ENCODE measurements at regions of chr7 and their contacts with region 1.

Region 1: GRCh38 chr7:12490117-12490688 is 80.3 kb upstream of the SCIN start:
- DNase-seq: no peak
- ATAC-seq: peak; percentile 65
- H3K4me3 Mint-ChIP-seq: no peak overlapping the region
- H3K27ac Mint-ChIP-seq: no peak overlapping the region
- H3K4me1 Mint-ChIP-seq: peaks cover 29% of the 10 kb centered on the region
- H3K27me3 Mint-ChIP-seq: no peaks in the 10 kb centered on the region
- CTCF ChIP-seq: peak; percentile 43

Region 2: DNA sequence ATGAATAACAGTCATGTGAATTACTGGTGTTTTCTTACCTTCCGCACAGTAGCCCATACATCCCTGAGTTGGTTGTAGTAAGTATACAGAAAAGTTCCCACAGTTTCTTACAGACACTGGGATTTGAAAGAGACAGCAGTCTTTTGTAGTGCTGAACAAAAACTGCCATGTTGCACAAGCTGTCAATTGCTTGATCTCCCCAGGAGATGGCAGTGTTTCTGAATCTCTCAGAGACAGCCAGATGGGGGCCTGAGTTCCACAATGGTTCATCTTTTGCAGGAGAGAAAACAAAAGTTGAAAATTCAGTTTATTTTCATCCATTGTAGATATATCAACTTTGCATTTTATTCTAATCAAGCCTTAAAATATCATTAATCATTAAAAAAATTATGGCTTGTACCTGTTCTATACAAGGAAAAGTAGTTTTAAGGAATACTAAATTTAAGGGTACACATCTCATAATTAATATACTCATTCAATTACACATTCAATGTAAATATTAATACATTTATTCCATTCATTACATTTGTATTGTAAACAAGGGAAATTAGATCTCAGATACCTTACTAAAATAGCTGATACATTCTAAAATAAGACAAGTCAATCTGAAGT is 101.0 kb before region 1 on chr7:
- CTCF ChIA-PET with region 1: interaction called, 12 read pairs
- POLR2A ChIA-PET with region 1: no interaction called
- DNase-seq: peak; percentile 65
- ATAC-seq: peak; percentile 93
- H3K4me3 Mint-ChIP-seq: no peak overlapping the region
- H3K27ac Mint-ChIP-seq: no peak overlapping the region
- H3K4me1 Mint-ChIP-seq: peaks cover 30% of the 10 kb centered on the region
- H3K27me3 Mint-ChIP-seq: no peaks in the 10 kb centered on the region
- CTCF ChIP-seq: peak; percentile 62

Region 3: DNA sequence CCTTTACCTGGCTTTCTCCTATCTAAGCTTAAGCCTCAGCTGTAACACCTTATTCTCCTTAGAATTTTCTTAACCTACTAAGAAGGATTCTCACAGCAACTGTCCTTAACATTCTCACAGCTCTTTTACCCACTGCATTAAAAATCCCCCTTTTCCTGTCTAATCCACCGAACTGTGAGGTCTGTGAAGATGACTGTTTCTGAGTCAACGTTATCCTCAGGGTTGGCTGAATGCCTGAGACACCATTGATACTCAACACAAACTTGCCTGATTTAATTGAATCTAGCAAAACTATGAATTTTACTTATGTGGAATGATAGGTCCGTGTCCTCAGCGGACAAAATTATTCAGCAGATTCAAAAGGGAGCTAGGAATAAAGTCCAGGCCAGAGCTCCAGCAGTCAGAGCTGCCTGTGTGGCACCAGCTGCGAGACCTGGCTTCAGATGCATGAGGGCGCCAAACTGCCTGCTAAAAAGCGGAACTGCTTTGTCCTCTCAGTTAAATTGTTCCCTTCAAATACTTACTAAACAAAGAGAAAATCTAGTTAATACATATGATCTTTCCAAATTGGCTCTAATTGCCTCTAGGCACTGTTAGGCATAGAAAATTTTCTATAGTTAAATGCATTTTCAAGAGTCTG is 53.2 kb before region 1 on chr7:
- CTCF ChIA-PET with region 1: interaction called, 47 read pairs
- POLR2A ChIA-PET with region 1: no interaction called
- DNase-seq: peak; percentile 51
- ATAC-seq: peak; percentile 91
- H3K4me3 Mint-ChIP-seq: no peak overlapping the region
- H3K27ac Mint-ChIP-seq: no peak overlapping the region
- H3K4me1 Mint-ChIP-seq: peaks cover 27% of the 10 kb centered on the region
- H3K27me3 Mint-ChIP-seq: no peaks in the 10 kb centered on the region; the same call in 1 of the 2 replicates
- CTCF ChIP-seq: no peak

Region 4: GRCh38 chr7:12475362-12476063 is 14.7 kb before region 1 on chr7:
- CTCF ChIA-PET with region 1: interaction called, 12 read pairs
- POLR2A ChIA-PET with region 1: no interaction called
- DNase-seq: no peak
- ATAC-seq: peak; percentile 71
- H3K4me3 Mint-ChIP-seq: no peak overlapping the region
- H3K27ac Mint-ChIP-seq: no peak overlapping the region
- H3K4me1 Mint-ChIP-seq: peaks cover 8% of the 10 kb centered on the region
- H3K27me3 Mint-ChIP-seq: no peaks in the 10 kb centered on the region
- CTCF ChIP-seq: no peak

Region 5: GRCh38 chr7:12518920-12519681 is 28.9 kb after region 1 on chr7:
- CTCF ChIA-PET with region 1: interaction called, 19 read pairs
- POLR2A ChIA-PET with region 1: no interaction called
- DNase-seq: peak; percentile 68
- ATAC-seq: peak; percentile 98
- H3K4me3 Mint-ChIP-seq: no peak overlapping the region
- H3K27ac Mint-ChIP-seq: no peak overlapping the region
- H3K4me1 Mint-ChIP-seq: peaks cover 3% of the 10 kb centered on the region
- H3K27me3 Mint-ChIP-seq: peaks cover 5% of the 10 kb centered on the region; the same call in 1 of the 2 replicates
- CTCF ChIP-seq: peak; percentile 75

Measured in WTC11 (cell line).